ENCODE measurements at regions of chr10 and their contacts with region 1.

Region 1: GRCh38 chr10:69914398-69915214 is 112.9 kb downstream of the COL13A1 start:
- DNase-seq: peak; percentile 87
- ATAC-seq: peak; percentile 89
- H3K4me3 Mint-ChIP-seq: no peak overlapping the region
- H3K27ac Mint-ChIP-seq: no peak overlapping the region
- H3K4me1 Mint-ChIP-seq: peaks cover 23% of the 10 kb centered on the region
- H3K27me3 Mint-ChIP-seq: peaks cover 3% of the 10 kb centered on the region; the same call in 1 of the 2 replicates
- CTCF ChIP-seq: peak; percentile 99

Region 2: GRCh38 chr10:69644658-69645295 is 269.8 kb before region 1 on chr10:
- CTCF ChIA-PET with region 1: interaction called, 10 read pairs
- POLR2A ChIA-PET with region 1: no interaction called
- DNase-seq: peak; percentile 77
- ATAC-seq: peak; percentile 75
- H3K4me3 Mint-ChIP-seq: no peak overlapping the region
- H3K27ac Mint-ChIP-seq: no peak overlapping the region
- H3K4me1 Mint-ChIP-seq: peaks cover 30% of the 10 kb centered on the region
- H3K27me3 Mint-ChIP-seq: no peaks in the 10 kb centered on the region; the same call in 1 of the 2 replicates
- CTCF ChIP-seq: peak; percentile 72

Region 3: GRCh38 chr10:69786791-69787190 is 127.8 kb before region 1 on chr10:
- CTCF ChIA-PET with region 1: interaction called, 316 read pairs
- POLR2A ChIA-PET with region 1: no interaction called
- DNase-seq: no peak
- ATAC-seq: peak; percentile 85
- H3K4me3 Mint-ChIP-seq: no peak overlapping the region
- H3K27ac Mint-ChIP-seq: no peak overlapping the region
- H3K4me1 Mint-ChIP-seq: no peaks in the 10 kb centered on the region
- H3K27me3 Mint-ChIP-seq: peaks cover 17% of the 10 kb centered on the region
- CTCF ChIP-seq: no peak

Region 4: DNA sequence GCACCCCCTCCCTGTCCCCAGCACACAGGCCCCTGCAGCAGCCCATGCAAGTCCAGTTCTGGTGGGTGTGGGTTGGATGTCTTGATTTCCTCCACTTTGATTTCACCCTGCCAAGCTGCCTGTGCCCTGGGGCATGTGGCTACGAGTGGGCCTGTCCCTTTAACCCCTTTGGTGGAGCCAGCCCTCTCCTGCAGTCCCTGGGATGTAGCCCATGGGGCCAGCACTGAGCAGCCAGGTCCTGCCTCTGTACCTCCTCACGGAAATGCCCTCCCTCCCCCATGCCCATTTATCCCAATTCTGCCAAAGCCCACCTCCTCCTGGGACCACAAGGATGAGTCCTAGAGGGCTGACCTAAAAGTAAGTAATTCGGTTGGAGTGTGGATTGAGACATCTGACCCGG is 101.0 kb before region 1 on chr10:
- CTCF ChIA-PET with region 1: interaction called, 92 read pairs
- POLR2A ChIA-PET with region 1: no interaction called
- DNase-seq: no peak
- ATAC-seq: peak; percentile 58
- H3K4me3 Mint-ChIP-seq: no peak overlapping the region
- H3K27ac Mint-ChIP-seq: no peak overlapping the region
- H3K4me1 Mint-ChIP-seq: peaks cover 36% of the 10 kb centered on the region
- H3K27me3 Mint-ChIP-seq: peaks cover 8% of the 10 kb centered on the region
- CTCF ChIP-seq: no peak

Region 5: GRCh38 chr10:69855346-69856111 is 59.1 kb before region 1 on chr10:
- CTCF ChIA-PET with region 1: interaction called, 84 read pairs
- POLR2A ChIA-PET with region 1: no interaction called
- DNase-seq: no peak
- ATAC-seq: no peak
- H3K4me3 Mint-ChIP-seq: no peak overlapping the region
- H3K27ac Mint-ChIP-seq: no peak overlapping the region
- H3K4me1 Mint-ChIP-seq: peaks cover 58% of the 10 kb centered on the region
- H3K27me3 Mint-ChIP-seq: no peaks in the 10 kb centered on the region
- CTCF ChIP-seq: no peak

Region 6: GRCh38 chr10:69885379-69886013 is 29.1 kb before region 1 on chr10:
- CTCF ChIA-PET with region 1: interaction called, 73 read pairs
- POLR2A ChIA-PET with region 1: no interaction called
- DNase-seq: no peak
- ATAC-seq: peak; percentile 48
- H3K4me3 Mint-ChIP-seq: no peak overlapping the region
- H3K27ac Mint-ChIP-seq: no peak overlapping the region
- H3K4me1 Mint-ChIP-seq: peaks cover 16% of the 10 kb centered on the region
- H3K27me3 Mint-ChIP-seq: no peaks in the 10 kb centered on the region; the same call in none of the 2 replicates
- CTCF ChIP-seq: peak; percentile 42; the same call in 1 of the 2 replicates

Region 7: GRCh38 chr10:69925111-69925510 is 10.5 kb after region 1 on chr10:
- CTCF ChIA-PET with region 1: interaction called, 24 read pairs
- POLR2A ChIA-PET with region 1: no interaction called
- DNase-seq: no peak
- ATAC-seq: no peak
- H3K4me3 Mint-ChIP-seq: no peak overlapping the region
- H3K27ac Mint-ChIP-seq: no peak overlapping the region; the same call in 1 of the 2 replicates
- H3K4me1 Mint-ChIP-seq: peaks cover 14% of the 10 kb centered on the region
- H3K27me3 Mint-ChIP-seq: no peaks in the 10 kb centered on the region; the same call in none of the 2 replicates
- CTCF ChIP-seq: no peak

Region 8: GRCh38 chr10:70125918-70126552 is 211.4 kb after region 1 on chr10:
- CTCF ChIA-PET with region 1: no interaction called
- POLR2A ChIA-PET with region 1: no interaction called
- DNase-seq: no peak
- ATAC-seq: peak; percentile 70
- H3K4me3 Mint-ChIP-seq: no peak overlapping the region
- H3K27ac Mint-ChIP-seq: no peak overlapping the region
- H3K4me1 Mint-ChIP-seq: no peaks in the 10 kb centered on the region
- H3K27me3 Mint-ChIP-seq: 0 out of 2 replicates have a peak, but pooled peaks cover under 1% of the 10 kb centered on the region
- CTCF ChIP-seq: no peak